Naive thymus-derived CD4-positive, alpha-beta T cell (primary cell): ENCODE measurements at regions of chr9 and their contacts with region 1.

Region 1: GRCh38 chr9:5186416-5187169 is 1.2 kb upstream of the INSL6 start:
- DNase-seq: peak in 7 of 9 donors; percentile 51 to 74 (median 63)
- ATAC-seq: peak; percentile 92
- H3K4me3 ChIP-seq: no peak overlapping the region
- H3K4me3 Mint-ChIP-seq: peak overlapping the region in 1 of 10 donors; percentile 13
- H3K27ac ChIP-seq: no peak overlapping the region
- H3K27ac Mint-ChIP-seq: no peak overlapping the region
- H3K4me1 ChIP-seq: no peaks in the 10 kb centered on the region
- H3K4me1 Mint-ChIP-seq: peaks cover 5 to 15% (median 10%) of the 10 kb centered on the region in 7 donors
- H3K27me3 ChIP-seq: no peaks in the 10 kb centered on the region
- H3K27me3 Mint-ChIP-seq: peaks cover 0 to 5% (median 0%) of the 10 kb centered on the region in 5 donors

Region 2: DNA sequence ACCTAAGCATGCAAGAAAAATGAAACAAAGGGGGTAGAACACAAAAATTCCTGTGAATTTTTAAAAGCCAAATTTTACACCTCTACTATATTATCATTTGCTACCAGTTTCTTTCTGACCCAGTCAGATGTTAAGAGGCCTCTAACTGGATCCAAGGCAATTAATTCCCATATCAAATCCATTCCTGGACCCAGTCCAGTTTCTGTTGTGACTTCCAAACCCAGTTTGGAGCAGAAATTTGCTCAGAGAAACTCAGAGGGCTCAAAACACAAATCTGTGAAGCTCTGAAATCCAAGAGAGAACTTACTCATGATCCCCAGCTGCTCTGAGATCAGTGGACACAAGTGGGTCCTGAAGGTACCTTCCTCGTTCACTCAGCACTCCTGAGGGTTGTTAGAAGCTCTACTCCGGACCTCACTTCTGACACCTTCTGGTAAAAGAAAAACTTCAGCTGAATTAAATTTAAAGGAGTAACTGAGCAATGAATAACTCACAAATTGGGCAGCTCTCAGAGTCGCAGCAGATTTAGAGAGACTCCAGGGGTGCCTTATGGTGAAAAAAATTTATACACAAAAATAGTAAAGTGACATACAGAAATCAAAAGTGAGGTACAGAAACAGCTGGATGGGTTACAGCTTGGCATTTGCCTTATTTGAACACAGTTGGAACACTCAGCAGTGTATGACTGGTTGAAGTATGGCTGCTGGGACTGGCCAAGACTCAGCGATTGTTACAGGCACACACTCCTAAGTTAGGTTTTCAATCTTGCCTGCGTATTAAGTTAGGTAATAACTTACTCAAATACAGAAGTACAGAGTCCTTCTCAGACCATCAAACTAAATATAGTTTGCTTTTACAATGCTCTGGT is 77.0 kb after region 1 on chr9:
- CTCF ChIA-PET with region 1: interaction called, 4 read pairs
- POLR2A ChIA-PET with region 1: no interaction called
- intact Hi-C with region 1: loop called (anchors 1 to 5 kb)
- DNase-seq: peak in 5 of 9 donors; percentile 1 to 23 (median 4)
- ATAC-seq: no peak
- H3K4me3 ChIP-seq: no peak overlapping the region
- H3K4me3 Mint-ChIP-seq: peak overlapping the region in 6 of 10 donors; percentile 23 to 36 (median 30)
- H3K27ac ChIP-seq: no peak overlapping the region
- H3K27ac Mint-ChIP-seq: peak overlapping the region in 2 of 9 donors; percentile 0 to 19
- H3K4me1 ChIP-seq: no peaks in the 10 kb centered on the region
- H3K4me1 Mint-ChIP-seq: peaks cover 9 to 24% (median 17%) of the 10 kb centered on the region in 7 donors
- H3K27me3 ChIP-seq: no peaks in the 10 kb centered on the region
- H3K27me3 Mint-ChIP-seq: no peaks in the 10 kb centered on the region

Region 3: GRCh38 chr9:5321058-5321457 is 134.5 kb after region 1 on chr9:
- CTCF ChIA-PET with region 1: no interaction called
- POLR2A ChIA-PET with region 1: no interaction called
- intact Hi-C with region 1: loop called in 1 of 2 experiments (anchors 1 kb)
- DNase-seq: no peak
- ATAC-seq: peak; percentile 40
- H3K4me3 ChIP-seq: no peak overlapping the region
- H3K4me3 Mint-ChIP-seq: no peak overlapping the region
- H3K27ac ChIP-seq: no peak overlapping the region
- H3K27ac Mint-ChIP-seq: peak overlapping the region in 1 of 9 donors; percentile 23
- H3K4me1 ChIP-seq: no peaks in the 10 kb centered on the region
- H3K4me1 Mint-ChIP-seq: peaks cover 5 to 37% (median 20%) of the 10 kb centered on the region in 7 donors
- H3K27me3 ChIP-seq: no peaks in the 10 kb centered on the region
- H3K27me3 Mint-ChIP-seq: no peaks in the 10 kb centered on the region

Region 4: DNA sequence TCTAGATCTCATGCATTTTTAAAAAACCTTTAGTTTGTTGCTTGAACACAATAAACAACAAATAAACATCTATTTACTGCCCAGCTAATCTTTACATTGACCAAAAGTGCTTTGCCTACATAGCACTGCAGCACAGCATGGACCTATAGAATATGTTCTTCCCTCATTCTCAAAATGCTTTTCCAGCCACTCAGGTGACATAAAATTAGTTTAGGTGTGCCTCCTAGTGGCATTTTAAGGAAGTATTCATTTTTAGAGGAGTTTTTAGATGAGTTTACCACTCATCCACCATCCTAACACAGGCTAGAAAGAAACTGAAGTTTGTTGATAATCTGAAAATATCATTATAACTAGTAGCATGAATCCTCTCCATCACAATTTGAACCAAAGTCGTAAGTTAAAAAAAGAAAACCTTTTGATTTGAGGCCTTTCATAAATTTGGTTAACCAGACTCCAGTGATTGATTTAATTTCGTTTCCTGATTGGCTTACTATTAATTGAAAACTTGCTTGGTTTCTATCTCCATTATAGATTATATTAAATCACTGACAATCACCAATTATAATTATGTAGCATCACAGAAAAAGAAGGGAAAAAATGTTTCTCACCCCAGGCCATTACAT is 238.5 kb after region 1 on chr9:
- CTCF ChIA-PET with region 1: interaction called, 52 read pairs
- POLR2A ChIA-PET with region 1: interaction called, 3 read pairs
- intact Hi-C with region 1: loop called (anchors 1 kb)
- DNase-seq: peak in 6 of 9 donors; percentile 20 to 54 (median 43)
- ATAC-seq: peak; percentile 68
- H3K4me3 ChIP-seq: no peak overlapping the region
- H3K4me3 Mint-ChIP-seq: no peak overlapping the region
- H3K27ac ChIP-seq: no peak overlapping the region
- H3K27ac Mint-ChIP-seq: no peak overlapping the region
- H3K4me1 ChIP-seq: no peaks in the 10 kb centered on the region
- H3K4me1 Mint-ChIP-seq: peaks cover 0 to 15% (median 6%) of the 10 kb centered on the region in 7 donors
- H3K27me3 ChIP-seq: no peaks in the 10 kb centered on the region
- H3K27me3 Mint-ChIP-seq: no peaks in the 10 kb centered on the region

Region 5: DNA sequence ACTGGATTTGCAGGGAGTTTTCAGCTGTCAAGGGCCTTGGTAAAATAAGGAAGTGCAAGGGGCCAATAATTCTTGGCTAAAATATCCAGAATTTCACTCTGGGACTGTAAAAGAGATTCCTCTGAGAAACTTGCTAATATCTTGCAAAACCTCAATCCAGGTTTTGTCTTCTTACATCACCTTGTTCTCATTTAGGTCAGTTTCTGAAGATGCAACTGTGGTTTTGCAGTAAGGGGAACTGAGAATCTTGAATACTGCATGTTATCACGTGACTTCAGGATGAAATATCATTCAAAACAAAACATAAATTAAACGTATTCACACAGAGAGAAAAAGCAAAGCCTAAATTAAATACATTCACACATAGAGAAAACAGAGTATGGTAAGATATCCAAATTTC is 407.3 kb after region 1 on chr9:
- CTCF ChIA-PET with region 1: interaction called, 15 read pairs
- POLR2A ChIA-PET with region 1: no interaction called
- intact Hi-C with region 1: loop called (anchors 1 kb)
- DNase-seq: no peak
- ATAC-seq: no peak
- H3K4me3 ChIP-seq: no peak overlapping the region
- H3K4me3 Mint-ChIP-seq: no peak overlapping the region
- H3K27ac ChIP-seq: no peak overlapping the region
- H3K27ac Mint-ChIP-seq: peak overlapping the region in 2 of 9 donors; percentile 46 to 47
- H3K4me1 ChIP-seq: no peaks in the 10 kb centered on the region
- H3K4me1 Mint-ChIP-seq: peaks cover 4 to 28% (median 11%) of the 10 kb centered on the region in 7 donors
- H3K27me3 ChIP-seq: no peaks in the 10 kb centered on the region
- H3K27me3 Mint-ChIP-seq: peaks cover 0 to 7% (median 0%) of the 10 kb centered on the region in 5 donors